ENCODE measurements at regions of chr19 and their contacts with region 1.

Region 1: GRCh38 chr19:45478454-45479238 is 10.8 kb downstream of the FOSB start:
- DNase-seq: peak; percentile 89
- H3K4me3 ChIP-seq: peak overlapping the region; percentile 16 to 60 (median 40)
- H3K27ac ChIP-seq: peak overlapping the region; percentile 85 to 97 (median 94)
- H3K4me1 ChIP-seq: peaks cover 4 to 16% (median 7%) of the 10 kb centered on the region in 4 donors
- H3K27me3 ChIP-seq: peaks cover 31% of the 10 kb centered on the region
- CTCF ChIP-seq: peak; percentile 97 to 100 (median 98)
- EP300 ChIP-seq: no peak
- POLR2A ChIP-seq: peak; percentile 42

Region 2: DNA sequence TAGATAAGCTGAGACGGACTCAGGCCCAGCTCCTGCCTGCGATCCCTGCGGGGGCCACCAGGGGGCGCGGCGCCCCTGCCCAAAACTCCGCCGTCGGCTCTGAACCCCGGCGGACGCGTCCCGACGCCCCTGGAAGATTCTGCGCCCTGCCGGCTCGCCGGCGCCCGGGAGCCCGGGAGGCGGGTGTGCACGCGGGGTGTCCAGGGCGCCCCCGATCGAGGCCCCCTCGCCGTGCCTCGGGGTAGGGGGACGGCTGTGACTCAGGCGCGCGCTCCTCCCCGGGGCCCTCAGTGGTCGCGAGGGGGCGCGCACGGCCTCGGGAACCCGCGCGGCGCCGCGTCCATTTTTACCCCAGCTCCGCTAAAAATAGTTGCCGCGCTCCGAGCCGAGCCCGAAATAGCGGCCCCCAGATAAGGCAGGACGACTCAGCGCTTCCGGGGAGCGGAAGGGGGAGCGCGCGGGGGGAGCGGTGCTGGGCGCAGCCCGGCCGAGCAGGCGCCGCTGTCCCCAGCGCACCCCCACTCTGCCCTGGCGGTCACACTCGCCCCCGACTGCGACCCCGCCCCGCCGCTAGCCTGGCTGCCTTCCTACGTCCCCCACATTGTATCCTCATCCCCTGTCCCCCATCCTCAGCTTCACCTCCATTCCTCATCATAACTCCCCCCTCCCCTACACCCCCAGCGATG is 38.9 kb before region 1 on chr19:
- in situ Hi-C with region 1: loop called (anchors 5 kb)
- intact Hi-C with region 1: loop called (anchors 2 kb)
- DNase-seq: peak; percentile 88
- H3K4me3 ChIP-seq: peak overlapping the region; percentile 42 to 77 (median 61)
- H3K27ac ChIP-seq: peak overlapping the region; percentile 87 to 97 (median 89)
- H3K4me1 ChIP-seq: peaks cover 7 to 33% (median 18%) of the 10 kb centered on the region in 4 donors
- H3K27me3 ChIP-seq: no peaks in the 10 kb centered on the region
- CTCF ChIP-seq: peak; percentile 98 to 100 (median 100)
- EP300 ChIP-seq: no peak
- POLR2A ChIP-seq: no peak

Measured in transverse colon (tissue), 4 donors.